Ascending aorta (tissue), 2 donors: ENCODE measurements at regions of chr7 and their contacts with region 1.

Region 1: DNA sequence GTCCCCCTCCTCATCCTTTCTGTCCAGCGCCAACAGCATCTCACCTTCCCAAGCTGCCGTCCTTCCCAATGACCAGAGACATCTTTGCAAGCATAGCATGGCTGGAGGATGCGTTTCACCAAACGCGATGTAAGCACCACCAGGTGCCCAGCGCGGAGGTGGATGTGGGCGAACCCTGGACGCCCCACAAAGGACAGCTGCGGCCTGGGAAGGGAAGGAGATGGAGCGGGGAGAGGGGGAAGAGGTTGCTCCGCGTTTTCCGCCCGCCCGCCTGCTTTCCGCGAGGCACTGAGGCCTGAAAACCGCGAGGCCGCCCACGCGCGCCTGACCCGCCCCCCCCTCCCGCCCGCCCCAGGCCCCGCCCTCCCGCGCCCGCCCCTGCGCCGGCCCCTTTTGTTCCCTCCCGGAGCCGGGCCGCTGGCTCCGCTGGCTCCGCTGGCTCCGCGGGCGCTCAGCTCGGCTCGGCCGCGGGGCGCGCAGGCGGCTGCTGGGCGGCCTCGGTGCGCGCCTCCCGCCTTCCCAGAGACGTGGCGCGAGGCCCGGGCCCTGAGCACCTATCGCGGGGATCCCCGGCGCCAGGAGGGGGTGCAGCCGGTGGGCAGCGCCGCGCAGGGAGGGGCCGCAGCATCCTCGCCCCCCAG is at the start of gene CLIP2:
- DNase-seq: peak in 1 of 2 donors; percentile 87
- H3K4me3 ChIP-seq: peak within 1 kb of the TSS; percentile 95 to 99
- H3K27ac ChIP-seq: peak within 1 kb of the TSS; percentile 82 to 93
- H3K4me1 ChIP-seq: peaks cover 12 to 23% of the 10 kb centered on the region in 2 donors
- H3K27me3 ChIP-seq: no peaks in the 10 kb centered on the region
- CTCF ChIP-seq: peak in 1 of 3 experiments; percentile 21
- total RNA-seq, gene CLIP2: 50.2 TPM

Region 2: GRCh38 chr7:74272305-74273038 is 16.7 kb before region 1 on chr7:
- intact Hi-C with region 1: loop called (anchors 1 kb)
- DNase-seq: peak; percentile 63 to 87
- H3K4me3 ChIP-seq: no peak overlapping the region
- H3K27ac ChIP-seq: peak overlapping the region; percentile 83 to 88
- H3K4me1 ChIP-seq: peaks cover 0 to 8% of the 10 kb centered on the region in 2 donors
- H3K27me3 ChIP-seq: no peaks in the 10 kb centered on the region
- CTCF ChIP-seq: no peak

Region 3: DNA sequence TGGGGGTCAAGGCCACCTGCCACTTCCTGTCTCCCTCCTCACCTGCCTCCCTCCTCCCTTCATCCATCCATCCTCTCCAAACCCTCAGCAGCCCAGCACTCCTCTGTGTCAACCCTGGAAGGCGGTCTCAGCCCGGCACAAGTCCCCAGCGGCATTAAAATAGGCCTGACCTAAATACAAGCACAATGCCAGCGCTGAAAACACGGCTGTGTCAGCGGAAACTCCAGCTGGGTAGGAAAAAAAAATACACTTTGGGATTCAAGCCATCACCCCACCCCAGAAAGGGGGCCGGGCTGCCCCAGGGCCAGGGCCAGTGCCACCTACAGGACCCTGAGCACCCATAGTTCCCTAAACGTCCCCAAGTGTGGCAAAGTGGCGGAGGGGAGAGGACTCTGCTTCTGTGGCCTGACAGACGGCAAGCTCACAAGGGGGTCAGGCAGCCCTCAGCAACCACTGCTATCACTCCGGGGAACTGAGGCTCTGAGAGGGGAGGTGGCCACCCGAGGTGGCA is 141.9 kb after region 1 on chr7:
- intact Hi-C with region 1: no loop called
- DNase-seq: no peak
- H3K4me3 ChIP-seq: no peak overlapping the region
- H3K27ac ChIP-seq: peak overlapping the region in 1 of 2 donors; percentile 37
- H3K4me1 ChIP-seq: no peaks in the 10 kb centered on the region
- H3K27me3 ChIP-seq: no peaks in the 10 kb centered on the region
- CTCF ChIP-seq: no peak